Activated naive CD4-positive, alpha-beta T cell treated with anti-CD3 and anti-CD28 coated beads for 36 hours (primary cell): ENCODE measurements at regions of chr6 and their contacts with region 1.

Region 1: GRCh38 chr6:47477497-47478232 is at the start of gene CD2AP:
- DNase-seq: peak; percentile 86
- H3K4me3 Mint-ChIP-seq: peak within 1 kb of the TSS; percentile 100
- H3K27ac Mint-ChIP-seq: peak within 1 kb of the TSS; percentile 98
- H3K4me1 Mint-ChIP-seq: peaks cover 24% of the 10 kb centered on the region
- H3K27me3 Mint-ChIP-seq: no peaks in the 10 kb centered on the region
- total RNA-seq, gene CD2AP: 16.1 to 18.1 TPM

Region 2: GRCh38 chr6:47512872-47513271 is 35.2 kb after region 1 on chr6:
- CTCF ChIA-PET with region 1: interaction called, 3 read pairs
- intact Hi-C with region 1: loop called (anchors 1 kb)
- DNase-seq: no peak
- H3K4me3 Mint-ChIP-seq: no peak overlapping the region
- H3K27ac Mint-ChIP-seq: no peak overlapping the region
- H3K4me1 Mint-ChIP-seq: peaks cover 28% of the 10 kb centered on the region
- H3K27me3 Mint-ChIP-seq: no peaks in the 10 kb centered on the region

Region 3: DNA sequence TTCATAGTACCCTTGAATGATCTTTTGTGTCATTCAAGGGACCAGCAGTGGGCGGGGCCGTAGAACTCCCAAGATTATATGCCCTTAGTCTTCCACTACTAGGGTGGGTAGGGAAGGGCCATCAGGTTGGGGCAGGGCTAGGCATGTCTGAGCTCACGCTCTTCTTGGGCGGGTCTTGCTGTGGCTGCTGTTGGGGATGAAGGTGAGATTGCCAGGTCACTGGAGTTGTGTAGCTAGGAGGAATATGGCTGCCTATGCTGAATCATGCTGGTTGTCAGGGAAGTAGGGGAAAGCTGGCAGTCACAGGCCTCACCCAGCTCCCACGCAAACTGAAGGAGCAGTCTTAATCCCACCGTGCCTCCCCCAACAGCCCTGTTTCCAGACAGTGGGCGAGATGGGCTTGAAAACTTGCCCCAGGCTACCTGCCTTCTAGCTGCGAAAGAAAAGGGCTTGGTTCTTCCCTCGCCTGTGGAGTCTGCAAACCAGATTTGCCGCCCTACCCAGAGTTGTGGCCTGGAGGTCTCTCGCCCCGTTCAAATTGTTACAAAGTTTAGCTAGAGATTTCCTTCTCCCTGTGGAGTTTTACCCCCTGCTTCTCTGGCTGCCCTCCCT is 144.3 kb after region 1 on chr6:
- CTCF ChIA-PET with region 1: interaction called, 3 read pairs
- intact Hi-C with region 1: loop called (anchors 5 kb)
- DNase-seq: no peak
- H3K4me3 Mint-ChIP-seq: no peak overlapping the region
- H3K27ac Mint-ChIP-seq: no peak overlapping the region
- H3K4me1 Mint-ChIP-seq: peaks cover 2% of the 10 kb centered on the region
- H3K27me3 Mint-ChIP-seq: no peaks in the 10 kb centered on the region

Region 4: DNA sequence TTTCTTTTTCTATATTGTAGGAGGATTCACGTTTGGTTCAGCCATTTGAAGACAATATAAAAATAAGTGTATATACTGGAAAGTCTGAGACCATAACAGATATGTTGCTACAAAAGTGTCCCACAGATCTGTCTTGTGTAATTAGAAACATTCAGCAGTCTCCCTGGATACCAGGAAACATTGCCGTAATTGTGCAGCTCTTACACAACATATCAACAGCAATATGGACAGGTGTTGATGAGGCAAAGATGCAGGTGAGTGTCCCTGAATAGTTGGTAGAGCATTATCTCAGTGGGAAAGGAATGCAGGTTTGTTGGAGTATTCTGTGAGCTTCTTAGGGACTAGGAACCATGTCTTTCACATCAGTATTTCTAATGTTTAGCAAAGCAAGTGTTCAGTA is 202.4 kb after region 1 on chr6:
- CTCF ChIA-PET with region 1: no interaction called
- intact Hi-C with region 1: no loop called
- DNase-seq: no peak
- H3K4me3 Mint-ChIP-seq: no peak overlapping the region
- H3K27ac Mint-ChIP-seq: no peak overlapping the region
- H3K4me1 Mint-ChIP-seq: no peaks in the 10 kb centered on the region
- H3K27me3 Mint-ChIP-seq: peaks cover 14% of the 10 kb centered on the region

Region 5: DNA sequence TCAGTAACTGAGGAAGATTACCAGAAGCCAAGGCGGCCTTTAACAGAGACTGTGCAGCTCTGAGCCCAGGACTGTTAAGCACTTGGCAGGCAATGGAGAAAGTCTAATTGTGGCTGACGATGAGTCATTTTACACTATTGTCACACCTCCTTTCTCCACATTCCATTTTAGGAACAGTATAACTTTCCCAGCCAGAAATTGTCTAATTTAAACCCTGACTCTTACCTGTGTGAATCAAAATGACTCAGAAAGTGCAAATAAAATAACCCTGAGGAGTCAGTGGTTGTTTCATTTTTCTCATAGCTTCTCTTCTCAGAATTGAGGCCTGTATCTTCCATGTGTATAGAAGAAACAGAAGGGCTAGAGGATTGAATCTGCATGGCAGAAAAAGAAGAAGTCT is 264.1 kb after region 1 on chr6:
- CTCF ChIA-PET with region 1: no interaction called
- intact Hi-C with region 1: loop called (anchors 5 kb)
- DNase-seq: peak; percentile 41
- H3K4me3 Mint-ChIP-seq: no peak overlapping the region
- H3K27ac Mint-ChIP-seq: peak overlapping the region; percentile 59
- H3K4me1 Mint-ChIP-seq: peaks cover 18% of the 10 kb centered on the region
- H3K27me3 Mint-ChIP-seq: peaks cover 8% of the 10 kb centered on the region

Region 6: GRCh38 chr6:49462927-49463611 is 1985.4 kb after region 1 on chr6 and contains the starts of genes CENPQ and MMUT:
- CTCF ChIA-PET with region 1: no interaction called
- intact Hi-C with region 1: loop called (anchors 1 kb)
- DNase-seq: peak; percentile 96
- H3K4me3 Mint-ChIP-seq: peak within 1 kb of the TSS; percentile 96
- H3K27ac Mint-ChIP-seq: peak within 1 kb of the TSS; percentile 89
- H3K4me1 Mint-ChIP-seq: peaks cover 41% of the 10 kb centered on the region
- H3K27me3 Mint-ChIP-seq: no peaks in the 10 kb centered on the region
- total RNA-seq, gene CENPQ: 19.3 to 19.9 TPM
- total RNA-seq, gene MMUT: 15.1 to 15.2 TPM